CD4-positive, alpha-beta memory T cell (primary cell): ENCODE measurements at regions of chr3 and their contacts with region 1.

Region 1: DNA sequence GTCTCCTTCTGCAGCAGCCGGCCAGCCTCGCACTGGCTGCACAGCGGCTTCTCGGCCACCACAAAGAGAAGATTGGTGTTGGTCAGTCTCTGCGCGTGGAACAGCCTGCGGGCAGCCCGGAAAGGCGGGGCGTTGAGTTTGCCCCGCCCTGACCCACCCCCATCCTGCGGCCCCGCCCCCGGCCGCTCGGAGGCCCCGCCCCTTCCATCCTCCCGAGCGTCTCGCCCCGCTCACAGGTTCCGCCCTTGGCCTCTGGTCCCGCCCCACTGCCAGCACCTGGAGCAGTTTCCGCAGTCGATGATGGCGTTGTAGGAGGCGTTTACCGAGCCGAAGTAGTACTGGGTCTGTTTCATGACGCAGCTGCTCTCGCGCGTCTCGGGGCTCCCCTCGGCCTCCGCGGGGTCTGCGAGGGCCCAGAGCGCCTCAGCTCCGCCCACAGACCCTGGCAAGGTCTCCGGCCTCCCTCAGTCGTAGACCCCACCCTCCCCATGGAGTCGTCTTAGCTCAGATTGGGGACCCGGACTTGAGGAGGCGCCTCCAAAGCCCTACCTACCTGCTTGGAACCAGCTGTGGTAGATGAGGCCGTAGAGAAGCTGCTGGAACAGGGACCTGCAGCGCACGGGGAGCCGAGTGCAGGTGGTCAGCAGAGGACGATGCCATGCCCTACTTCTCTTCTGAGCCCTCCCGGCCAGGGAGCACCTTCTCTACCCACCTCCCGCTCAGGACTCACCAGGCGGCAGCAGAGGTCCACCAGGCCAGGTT is 5.9 kb upstream of the TMEM115 start:
- DNase-seq: peak; percentile 92 to 97 (median 95)
- H3K4me3 ChIP-seq: peak overlapping the region; percentile 73 to 100
- H3K4me3 Mint-ChIP-seq: peak overlapping the region; percentile 86 to 94 (median 90)
- H3K27ac ChIP-seq: peak overlapping the region; percentile 87
- H3K27ac Mint-ChIP-seq: peak overlapping the region; percentile 91 to 97 (median 95)
- H3K4me1 ChIP-seq: peaks cover 30% of the 10 kb centered on the region
- H3K4me1 Mint-ChIP-seq: peaks cover 4 to 35% (median 18%) of the 10 kb centered on the region in 4 donors
- H3K27me3 ChIP-seq: no peaks in the 10 kb centered on the region
- H3K27me3 Mint-ChIP-seq: peaks cover 0 to 1% of the 10 kb centered on the region in 2 donors

Region 2: DNA sequence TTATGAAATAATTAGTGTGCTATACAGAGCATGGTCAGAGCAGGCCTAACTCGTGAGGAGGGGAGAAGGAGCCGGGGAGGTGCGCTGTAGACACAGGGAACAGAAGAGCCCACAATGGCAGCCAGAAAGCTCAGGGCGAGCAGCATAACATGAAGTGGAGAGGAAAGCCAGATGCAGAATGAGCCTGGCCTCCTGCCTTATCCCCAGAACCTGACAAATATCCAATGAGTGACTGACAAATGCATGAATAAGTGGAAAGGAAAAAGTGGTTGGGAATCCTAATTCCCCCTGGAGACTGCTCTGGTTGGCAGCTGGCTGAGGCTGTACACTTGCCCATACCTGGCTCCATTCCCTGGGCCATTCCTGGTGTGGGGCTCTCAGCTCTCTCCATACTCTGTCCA is 452.4 kb before region 1 on chr3:
- CTCF ChIA-PET with region 1: no interaction called
- POLR2A ChIA-PET with region 1: no interaction called
- intact Hi-C with region 1: no loop called
- DNase-seq: no peak
- H3K4me3 ChIP-seq: no peak overlapping the region
- H3K4me3 Mint-ChIP-seq: no peak overlapping the region
- H3K27ac ChIP-seq: no peak overlapping the region
- H3K27ac Mint-ChIP-seq: no peak overlapping the region
- H3K4me1 ChIP-seq: no peaks in the 10 kb centered on the region
- H3K4me1 Mint-ChIP-seq: peaks cover 3 to 5% (median 4%) of the 10 kb centered on the region in 4 donors
- H3K27me3 ChIP-seq: no peaks in the 10 kb centered on the region
- H3K27me3 Mint-ChIP-seq: no peaks in the 10 kb centered on the region

Region 3: GRCh38 chr3:50436114-50436674 is 70.9 kb after region 1 on chr3:
- CTCF ChIA-PET with region 1: no interaction called
- POLR2A ChIA-PET with region 1: no interaction called
- intact Hi-C with region 1: loop called (anchors 2 kb)
- DNase-seq: peak; percentile 63 to 74 (median 66)
- H3K4me3 ChIP-seq: no peak overlapping the region
- H3K4me3 Mint-ChIP-seq: no peak overlapping the region
- H3K27ac ChIP-seq: no peak overlapping the region
- H3K27ac Mint-ChIP-seq: peak overlapping the region in 1 of 7 donors; percentile 14
- H3K4me1 ChIP-seq: no peaks in the 10 kb centered on the region
- H3K4me1 Mint-ChIP-seq: peaks cover 0 to 6% (median 2%) of the 10 kb centered on the region in 4 donors
- H3K27me3 ChIP-seq: no peaks in the 10 kb centered on the region
- H3K27me3 Mint-ChIP-seq: peaks cover 0 to 3% of the 10 kb centered on the region in 2 donors